ENCODE measurements at regions of chr1 and their contacts with region 1.

Region 1: DNA sequence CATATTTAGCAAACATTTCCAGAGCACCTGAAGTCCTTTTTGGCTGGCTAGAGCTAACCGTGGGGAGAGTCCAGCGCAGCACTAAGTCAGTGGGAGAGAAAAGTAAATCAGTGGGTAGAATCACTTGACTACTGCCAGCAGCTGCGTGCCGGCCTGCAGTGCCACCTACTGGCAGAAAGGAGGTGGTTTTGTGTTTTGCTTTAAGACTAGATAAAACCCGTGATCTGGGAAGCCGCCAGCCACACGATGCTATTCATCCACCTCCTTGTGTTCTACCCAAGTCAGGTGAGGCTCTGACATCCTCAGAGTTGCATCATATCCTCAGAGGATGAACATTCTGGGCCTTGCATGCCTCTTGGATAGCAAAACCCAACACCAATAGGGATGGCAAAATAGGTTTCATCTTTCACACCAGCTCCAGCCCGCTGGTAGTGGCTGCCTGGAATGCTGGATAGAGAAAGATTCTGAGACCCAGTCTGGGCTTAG is 14.1 kb upstream of the HEYL start:
- DNase-seq: peak; percentile 78
- H3K4me3 ChIP-seq: no peak overlapping the region
- H3K27ac ChIP-seq: no peak overlapping the region
- H3K4me1 ChIP-seq: peaks cover 0 to 3% (median 0%) of the 10 kb centered on the region in 4 donors
- H3K27me3 ChIP-seq: peaks cover 16% of the 10 kb centered on the region
- CTCF ChIP-seq: peak; percentile 74 to 96 (median 92)
- EP300 ChIP-seq: no peak
- POLR2A ChIP-seq: no peak

Region 2: GRCh38 chr1:39609618-39610331 is 43.8 kb before region 1 on chr1:
- in situ Hi-C with region 1: loop called in 2 of 4 experiments (anchors 5 to 10 kb)
- intact Hi-C with region 1: loop called (anchors 2 kb)
- DNase-seq: peak; percentile 66
- H3K4me3 ChIP-seq: no peak overlapping the region
- H3K27ac ChIP-seq: peak overlapping the region in 1 of 4 donors; percentile 8
- H3K4me1 ChIP-seq: peaks cover 0 to 3% (median 0%) of the 10 kb centered on the region in 4 donors
- H3K27me3 ChIP-seq: peaks cover 2% of the 10 kb centered on the region
- CTCF ChIP-seq: peak in 3 of 5 experiments; percentile 53 to 73 (median 62)
- EP300 ChIP-seq: no peak
- POLR2A ChIP-seq: no peak

Measured in transverse colon (tissue), 4 donors.